Endothelial cell of umbilical vein (primary cell): ENCODE measurements at regions of chr1 and their contacts with region 1.

Region 1: GRCh38 chr1:59678493-59679228 is 136.1 kb upstream of the HOOK1 start:
- DNase-seq: peak; percentile 93
- H3K4me3 ChIP-seq: no peak overlapping the region
- H3K27ac ChIP-seq: peak overlapping the region; percentile 65
- H3K4me1 ChIP-seq: peaks cover 29% of the 10 kb centered on the region
- H3K27me3 ChIP-seq: no peaks in the 10 kb centered on the region
- CTCF ChIP-seq: no peak
- POLR2A ChIP-seq: peak; percentile 63

Region 2: GRCh38 chr1:59422921-59423575 is 255.6 kb before region 1 on chr1:
- CTCF ChIA-PET with region 1: no interaction called
- POLR2A ChIA-PET with region 1: no interaction called
- dilution Hi-C with region 1: no loop called
- intact Hi-C with region 1: loop called (anchors 10 kb)
- DNase-seq: peak; percentile 97
- H3K4me3 ChIP-seq: no peak overlapping the region
- H3K27ac ChIP-seq: peak overlapping the region; percentile 13
- H3K4me1 ChIP-seq: peaks cover 10% of the 10 kb centered on the region
- H3K27me3 ChIP-seq: no peaks in the 10 kb centered on the region
- CTCF ChIP-seq: no peak
- POLR2A ChIP-seq: no peak

Region 3: GRCh38 chr1:59596441-59596861 is 82.2 kb before region 1 on chr1:
- CTCF ChIA-PET with region 1: interaction called, 3 read pairs
- POLR2A ChIA-PET with region 1: no interaction called
- dilution Hi-C with region 1: no loop called
- intact Hi-C with region 1: loop called (anchors 2 kb)
- DNase-seq: peak; percentile 98
- H3K4me3 ChIP-seq: no peak overlapping the region
- H3K27ac ChIP-seq: peak overlapping the region; percentile 83
- H3K4me1 ChIP-seq: peaks cover 29% of the 10 kb centered on the region
- H3K27me3 ChIP-seq: no peaks in the 10 kb centered on the region
- CTCF ChIP-seq: no peak
- POLR2A ChIP-seq: no peak

Region 4: GRCh38 chr1:59609245-59609644 is 69.4 kb before region 1 on chr1:
- CTCF ChIA-PET with region 1: no interaction called
- POLR2A ChIA-PET with region 1: no interaction called
- dilution Hi-C with region 1: no loop called
- intact Hi-C with region 1: no loop called
- DNase-seq: no peak
- H3K4me3 ChIP-seq: no peak overlapping the region
- H3K27ac ChIP-seq: no peak overlapping the region
- H3K4me1 ChIP-seq: no peaks in the 10 kb centered on the region
- H3K27me3 ChIP-seq: no peaks in the 10 kb centered on the region
- CTCF ChIP-seq: no peak
- POLR2A ChIP-seq: no peak